ENCODE measurements at regions of chr1 and their contacts with region 1.

Region 1: DNA sequence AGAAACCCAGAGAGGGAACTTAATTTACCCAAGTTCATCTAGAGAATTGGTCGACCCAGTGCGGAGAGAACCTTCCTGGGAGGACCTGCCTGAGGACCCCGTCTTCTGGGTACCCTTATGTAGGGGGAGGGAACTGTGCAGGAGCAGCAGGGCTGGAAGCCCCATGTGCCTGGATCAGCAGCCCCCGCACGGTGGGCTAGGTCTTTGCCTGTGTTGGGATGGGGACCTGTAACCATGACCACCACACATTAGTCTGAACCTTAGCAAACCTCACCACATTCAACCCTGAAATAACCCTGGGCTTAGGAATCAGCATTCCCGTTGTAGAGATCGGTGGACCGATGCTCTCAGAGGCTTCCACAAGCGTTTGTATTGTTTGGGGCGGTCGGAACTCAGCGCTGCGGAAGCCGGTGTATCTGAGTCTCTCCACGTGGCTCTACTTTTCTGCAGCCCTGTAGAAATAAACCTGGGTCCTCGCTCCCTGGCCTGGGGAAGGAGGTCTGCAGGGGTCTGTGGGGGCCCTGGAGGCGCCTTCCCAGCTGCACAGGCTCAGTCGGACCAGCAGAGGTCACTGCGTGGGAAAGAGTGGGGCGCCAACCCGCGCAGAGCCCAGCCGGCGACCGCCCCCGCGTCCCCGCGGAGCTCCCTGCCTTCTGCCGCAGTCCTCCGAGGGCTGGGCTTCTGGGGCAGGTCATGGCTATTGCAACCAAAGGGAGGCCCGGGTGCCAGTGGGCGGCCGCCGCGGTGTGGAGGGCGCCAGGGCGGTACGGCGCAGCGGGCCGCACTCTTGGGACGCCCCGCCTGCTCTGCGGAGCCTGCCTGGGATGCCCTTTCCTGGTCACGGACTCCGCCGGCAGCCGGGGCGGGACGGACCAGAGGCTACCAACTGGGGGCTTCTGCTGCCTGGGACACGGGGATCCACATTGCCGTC is 36.2 kb upstream of the KCNA10 start:
- DNase-seq: peak; percentile 64
- ATAC-seq: peak; percentile 90
- H3K4me3 Mint-ChIP-seq: no peak overlapping the region
- H3K27ac Mint-ChIP-seq: no peak overlapping the region
- H3K4me1 Mint-ChIP-seq: peaks cover 8% of the 10 kb centered on the region
- H3K27me3 Mint-ChIP-seq: peaks cover 54% of the 10 kb centered on the region

Region 2: DNA sequence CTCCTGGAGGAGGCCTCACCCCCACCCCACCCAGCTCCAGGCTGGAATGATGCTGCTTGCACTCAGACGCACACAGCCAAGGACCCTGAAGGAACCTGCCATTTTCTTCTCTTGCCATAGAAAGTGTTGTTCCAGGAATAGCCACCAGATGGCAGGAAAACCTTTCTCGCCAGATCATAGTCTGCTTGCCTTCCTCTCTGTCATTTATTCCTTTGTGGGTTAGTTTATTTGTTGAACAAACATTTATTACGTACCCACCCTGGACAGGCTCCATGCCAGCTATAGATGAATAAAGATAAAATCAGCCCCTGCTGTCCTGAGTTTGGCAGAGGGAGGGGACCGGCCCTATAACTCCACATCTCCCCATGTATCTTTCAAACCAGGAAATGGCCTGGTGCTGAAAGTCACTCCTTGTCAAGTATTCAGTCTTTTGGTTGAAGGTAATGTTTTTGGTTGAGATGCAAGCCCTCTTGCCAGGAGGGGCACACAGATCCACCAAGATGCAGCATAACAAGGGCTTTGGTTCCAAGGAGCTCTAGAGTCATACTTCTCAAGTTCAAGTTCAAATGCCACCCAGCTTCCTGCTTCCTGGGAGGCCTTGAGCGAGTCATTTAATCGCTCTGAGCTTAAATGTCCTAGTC is 352.0 kb before region 1 on chr1:
- CTCF ChIA-PET with region 1: no interaction called
- DNase-seq: peak; percentile 82
- ATAC-seq: peak; percentile 64
- H3K4me3 Mint-ChIP-seq: no peak overlapping the region
- H3K27ac Mint-ChIP-seq: peak overlapping the region; percentile 86
- H3K4me1 Mint-ChIP-seq: peaks cover 15% of the 10 kb centered on the region
- H3K27me3 Mint-ChIP-seq: no peaks in the 10 kb centered on the region

Region 3: DNA sequence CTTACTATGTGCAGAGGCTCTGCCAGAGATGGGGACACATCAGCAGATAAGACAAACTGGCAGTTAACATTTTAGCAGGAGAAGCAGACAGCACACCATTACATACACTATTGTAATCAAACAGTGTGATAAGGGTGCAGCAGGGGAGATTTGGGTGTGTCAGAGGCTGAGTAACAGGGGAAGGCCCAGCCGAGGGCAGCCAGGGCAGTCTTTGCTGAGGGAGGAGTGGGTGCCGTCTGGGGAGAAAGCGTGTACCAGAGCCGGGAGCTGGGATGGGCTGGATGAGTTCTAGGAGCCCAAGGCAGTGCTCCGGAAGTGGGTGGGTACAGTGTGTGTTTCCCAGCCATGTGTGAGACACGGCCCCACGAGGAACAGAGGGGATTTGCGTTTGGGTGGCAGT is 67.4 kb before region 1 on chr1:
- CTCF ChIA-PET with region 1: no interaction called
- DNase-seq: no peak
- ATAC-seq: no peak
- H3K4me3 Mint-ChIP-seq: no peak overlapping the region
- H3K27ac Mint-ChIP-seq: no peak overlapping the region
- H3K4me1 Mint-ChIP-seq: no peaks in the 10 kb centered on the region
- H3K27me3 Mint-ChIP-seq: peaks cover 23% of the 10 kb centered on the region

Region 4: GRCh38 chr1:110524311-110525251 is 30.6 kb before region 1 on chr1:
- CTCF ChIA-PET with region 1: interaction called, 11 read pairs
- DNase-seq: peak; percentile 69
- ATAC-seq: peak; percentile 80
- H3K4me3 Mint-ChIP-seq: peak overlapping the region; percentile 30
- H3K27ac Mint-ChIP-seq: no peak overlapping the region
- H3K4me1 Mint-ChIP-seq: no peaks in the 10 kb centered on the region
- H3K27me3 Mint-ChIP-seq: peaks cover 52% of the 10 kb centered on the region

Region 5: GRCh38 chr1:110542725-110543124 is 12.4 kb before region 1 on chr1:
- CTCF ChIA-PET with region 1: interaction called, 11 read pairs
- DNase-seq: no peak
- ATAC-seq: peak; percentile 47
- H3K4me3 Mint-ChIP-seq: no peak overlapping the region
- H3K27ac Mint-ChIP-seq: no peak overlapping the region
- H3K4me1 Mint-ChIP-seq: no peaks in the 10 kb centered on the region
- H3K27me3 Mint-ChIP-seq: peaks cover 17% of the 10 kb centered on the region

Region 6: GRCh38 chr1:110605901-110606656 is 50.9 kb after region 1 on chr1 and contains the start of gene KCNA2:
- CTCF ChIA-PET with region 1: interaction called, 70 read pairs
- DNase-seq: no peak
- ATAC-seq: peak; percentile 46
- H3K4me3 Mint-ChIP-seq: peak within 1 kb of the TSS; percentile 74
- H3K27ac Mint-ChIP-seq: no peak within 1 kb of the TSS
- H3K4me1 Mint-ChIP-seq: peaks cover 22% of the 10 kb centered on the region
- H3K27me3 Mint-ChIP-seq: peaks cover 42% of the 10 kb centered on the region
- total RNA-seq, gene KCNA2: 2.4 to 3.7 TPM